ENCODE measurements at regions of chr7 and their contacts with region 1.

Region 1: GRCh38 chr7:128904381-128905197 is 5.9 kb downstream of the KCP start:
- DNase-seq: peak; percentile 12
- ATAC-seq: peak in 1 of 2 donors; percentile 45

Region 2: GRCh38 chr7:129091484-129092002 is 187.0 kb after region 1 on chr7:
- intact Hi-C with region 1: loop called (anchors 1 to 5 kb)
- DNase-seq: peak; percentile 75
- ATAC-seq: peak; percentile 86 to 89